Activated B cell treated with CpG ODN at 0.5 μM for 24 hours (primary cell): ENCODE measurements at regions of chr2 and their contacts with region 1.

Region 1: GRCh38 chr2:224601923-224602322 is 16.8 kb upstream of the CUL3 start:
- DNase-seq: no peak
- ATAC-seq: no peak
- H3K4me3 Mint-ChIP-seq: no peak overlapping the region
- H3K27ac Mint-ChIP-seq: no peak overlapping the region
- H3K4me1 Mint-ChIP-seq: peaks cover 14% of the 10 kb centered on the region
- H3K27me3 Mint-ChIP-seq: no peaks in the 10 kb centered on the region
- CTCF ChIP-seq: no peak

Region 2: DNA sequence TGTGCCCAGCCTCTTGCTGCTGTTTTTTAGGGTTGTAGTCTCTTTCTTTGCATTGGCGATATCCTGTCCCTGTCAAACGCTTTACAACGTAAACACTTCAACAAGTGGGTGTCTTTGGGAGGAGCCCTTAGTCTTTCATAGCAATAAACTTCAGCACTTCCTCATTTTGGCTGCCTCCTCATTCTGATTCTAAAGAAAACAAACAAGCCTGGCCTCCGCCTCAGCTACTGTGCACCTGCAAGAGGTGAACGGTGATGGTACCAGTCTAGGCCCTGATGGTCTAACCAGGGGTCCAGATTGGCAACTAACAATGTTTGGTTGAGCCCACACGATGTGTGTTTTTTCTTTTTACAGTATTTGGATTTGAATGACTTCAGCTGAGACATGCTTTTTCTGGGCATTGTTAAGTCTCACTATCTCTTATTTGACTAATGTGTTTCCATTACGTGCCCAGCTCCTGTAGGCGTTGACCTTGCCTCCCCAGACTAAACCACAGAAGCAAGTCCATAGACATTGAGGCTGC is 36.4 kb after region 1 on chr2:
- CTCF ChIA-PET with region 1: no interaction called
- POLR2A ChIA-PET with region 1: interaction called, 3 read pairs
- intact Hi-C with region 1: loop called (anchors 5 kb)
- DNase-seq: peak; percentile 30
- ATAC-seq: peak; percentile 85
- H3K4me3 Mint-ChIP-seq: peak overlapping the region; percentile 42
- H3K27ac Mint-ChIP-seq: peak overlapping the region; percentile 91
- H3K4me1 Mint-ChIP-seq: peaks cover 18% of the 10 kb centered on the region
- H3K27me3 Mint-ChIP-seq: no peaks in the 10 kb centered on the region
- CTCF ChIP-seq: no peak

Region 3: DNA sequence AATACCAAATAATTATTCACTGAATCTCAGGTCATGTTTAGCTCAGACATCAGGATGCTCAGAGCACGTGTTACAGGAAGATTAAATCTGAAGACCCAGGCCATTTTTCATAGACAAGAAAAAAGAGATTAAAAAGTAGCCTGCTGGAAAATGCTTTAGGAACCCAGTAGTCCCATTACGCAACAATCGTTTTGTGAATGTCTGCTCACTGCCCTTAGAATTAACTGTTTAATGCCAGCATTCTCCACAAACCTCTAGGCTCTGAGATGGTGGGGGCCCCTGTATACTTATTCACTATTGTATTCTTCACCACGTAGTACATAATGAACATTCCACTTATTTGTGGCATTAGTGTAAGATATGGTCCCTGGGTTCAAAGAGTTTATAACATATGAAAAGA is 643.0 kb after region 1 on chr2:
- CTCF ChIA-PET with region 1: no interaction called
- POLR2A ChIA-PET with region 1: no interaction called
- intact Hi-C with region 1: no loop called
- DNase-seq: no peak
- ATAC-seq: no peak
- H3K4me3 Mint-ChIP-seq: no peak overlapping the region
- H3K27ac Mint-ChIP-seq: no peak overlapping the region
- H3K4me1 Mint-ChIP-seq: no peaks in the 10 kb centered on the region
- H3K27me3 Mint-ChIP-seq: no peaks in the 10 kb centered on the region
- CTCF ChIP-seq: no peak